ENCODE measurements at regions of chr21 and their contacts with region 1.

Region 1: DNA sequence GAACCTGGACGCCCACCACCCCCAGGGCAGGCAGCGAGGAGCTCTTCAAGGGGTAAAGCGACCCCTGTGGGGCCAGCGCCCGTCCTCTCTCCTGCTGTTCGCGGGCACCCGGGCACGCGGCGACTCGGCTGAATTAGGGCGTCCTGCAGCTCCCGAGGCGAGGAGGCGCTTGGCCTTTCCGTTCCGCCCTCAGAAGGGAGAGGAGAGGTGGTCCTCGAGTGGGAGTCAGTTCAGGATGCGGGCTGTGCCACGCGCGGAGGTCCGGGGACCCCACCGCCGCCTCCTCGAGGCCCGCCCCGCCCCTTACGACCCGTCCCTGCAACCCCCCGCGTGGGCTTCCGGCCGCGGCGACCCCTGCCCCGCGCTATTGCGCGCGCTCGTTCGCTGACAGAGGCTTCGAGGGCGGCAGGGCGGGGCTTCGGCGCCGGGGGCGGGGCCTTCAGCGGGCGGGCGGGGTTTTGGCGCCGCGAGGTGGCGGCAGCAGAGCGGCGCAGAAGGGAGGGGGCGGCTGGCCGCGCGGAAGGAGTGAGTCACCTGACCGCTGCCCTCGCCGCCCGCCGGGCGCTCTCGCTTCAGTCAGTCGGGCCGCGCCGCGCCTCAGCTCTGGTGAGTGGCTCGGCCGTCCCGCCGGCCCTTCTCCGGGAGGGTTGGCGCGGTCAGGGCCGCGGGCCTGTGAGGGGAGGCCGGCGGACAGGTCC is at the start of gene BACH1:
- DNase-seq: peak; percentile 48 to 91 (median 78)
- ATAC-seq: peak; percentile 73 to 84 (median 78)
- H3K4me3 ChIP-seq: peak within 1 kb of the TSS; percentile 64 to 73
- H3K4me3 Mint-ChIP-seq: peak within 1 kb of the TSS; percentile 79 to 87 (median 87)
- H3K27ac ChIP-seq: peak within 1 kb of the TSS; percentile 52
- H3K27ac Mint-ChIP-seq: peak within 1 kb of the TSS; percentile 75 to 77
- H3K4me1 ChIP-seq: peaks cover 17 to 21% of the 10 kb centered on the region in 2 experiments
- H3K4me1 Mint-ChIP-seq: peaks cover 74 to 79% (median 78%) of the 10 kb centered on the region in 3 donors
- H3K27me3 ChIP-seq: peaks cover 0 to 3% of the 10 kb centered on the region in 2 experiments
- H3K27me3 Mint-ChIP-seq: no peaks in the 10 kb centered on the region
- total RNA-seq, gene BACH1: 42.9 to 54.8 (median 52.8) TPM

Region 2: GRCh38 chr21:29130270-29130969 is 168.1 kb before region 1 on chr21 and contains the start of gene MAP3K7CL:
- CTCF ChIA-PET with region 1: no interaction called
- POLR2A ChIA-PET with region 1: interaction called in 1 of 2 experiments, 10 read pairs
- DNase-seq: no peak
- ATAC-seq: no peak
- H3K4me3 ChIP-seq: no peak within 1 kb of the TSS
- H3K4me3 Mint-ChIP-seq: no peak within 1 kb of the TSS
- H3K27ac ChIP-seq: no peak within 1 kb of the TSS
- H3K27ac Mint-ChIP-seq: no peak within 1 kb of the TSS
- H3K4me1 ChIP-seq: no peaks in the 10 kb centered on the region
- H3K4me1 Mint-ChIP-seq: no peaks in the 10 kb centered on the region
- H3K27me3 ChIP-seq: no peaks in the 10 kb centered on the region
- H3K27me3 Mint-ChIP-seq: no peaks in the 10 kb centered on the region
- total RNA-seq, gene MAP3K7CL: 4.8 to 9.1 (median 7.4) TPM

Region 3: DNA sequence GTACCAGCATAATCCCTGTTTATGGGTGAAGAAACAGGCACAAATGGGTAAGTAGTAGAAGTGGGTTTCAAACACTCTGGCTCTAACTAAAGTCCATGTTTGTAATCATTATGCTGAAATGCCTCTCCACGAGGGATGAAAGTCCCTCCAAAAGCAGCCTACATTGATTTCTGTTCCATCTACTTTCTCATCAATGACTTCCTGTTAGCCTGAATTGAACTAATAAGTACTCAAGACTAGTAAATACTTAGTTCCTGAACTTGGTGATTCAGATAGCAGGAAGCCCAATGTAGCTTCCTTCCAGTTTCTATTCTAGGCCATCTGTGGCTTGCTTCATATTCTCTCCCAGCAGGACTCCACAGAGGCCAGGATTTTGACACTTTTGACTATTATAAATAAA is 11.1 kb before region 1 on chr21:
- CTCF ChIA-PET with region 1: no interaction called
- POLR2A ChIA-PET with region 1: no interaction called
- DNase-seq: no peak
- ATAC-seq: no peak
- H3K4me3 ChIP-seq: no peak overlapping the region
- H3K4me3 Mint-ChIP-seq: no peak overlapping the region
- H3K27ac ChIP-seq: no peak overlapping the region
- H3K27ac Mint-ChIP-seq: no peak overlapping the region
- H3K4me1 ChIP-seq: no peaks in the 10 kb centered on the region
- H3K4me1 Mint-ChIP-seq: peaks cover 0 to 6% (median 4%) of the 10 kb centered on the region in 3 donors
- H3K27me3 ChIP-seq: no peaks in the 10 kb centered on the region
- H3K27me3 Mint-ChIP-seq: peaks cover 0 to 4% of the 10 kb centered on the region in 2 donors

Region 4: DNA sequence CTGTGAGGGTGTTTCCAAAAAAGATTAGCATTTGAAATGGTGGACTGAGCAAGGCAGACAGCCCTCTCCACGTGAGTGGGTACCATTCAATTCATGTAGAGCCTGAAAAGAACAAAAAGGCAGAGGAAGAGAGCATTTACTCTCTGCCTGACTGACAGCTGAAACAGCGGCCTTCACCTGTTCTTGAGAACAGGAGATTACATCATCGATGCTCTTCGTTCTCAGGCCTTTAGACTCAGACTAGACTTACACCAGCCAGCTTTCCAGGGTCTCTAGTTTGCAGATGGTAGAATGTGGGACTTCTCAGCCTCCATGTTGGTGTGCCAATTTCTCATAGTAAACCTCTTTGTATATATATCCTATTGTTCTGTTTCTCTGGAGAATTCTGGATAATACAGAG is 302.6 kb after region 1 on chr21:
- CTCF ChIA-PET with region 1: no interaction called
- POLR2A ChIA-PET with region 1: no interaction called
- DNase-seq: no peak
- ATAC-seq: no peak
- H3K4me3 ChIP-seq: no peak overlapping the region
- H3K4me3 Mint-ChIP-seq: no peak overlapping the region
- H3K27ac ChIP-seq: no peak overlapping the region
- H3K27ac Mint-ChIP-seq: no peak overlapping the region
- H3K4me1 ChIP-seq: no peaks in the 10 kb centered on the region
- H3K4me1 Mint-ChIP-seq: no peaks in the 10 kb centered on the region
- H3K27me3 ChIP-seq: no peaks in the 10 kb centered on the region
- H3K27me3 Mint-ChIP-seq: no peaks in the 10 kb centered on the region